ENCODE measurements at regions of chr17 and their contacts with region 1.

Region 1: DNA sequence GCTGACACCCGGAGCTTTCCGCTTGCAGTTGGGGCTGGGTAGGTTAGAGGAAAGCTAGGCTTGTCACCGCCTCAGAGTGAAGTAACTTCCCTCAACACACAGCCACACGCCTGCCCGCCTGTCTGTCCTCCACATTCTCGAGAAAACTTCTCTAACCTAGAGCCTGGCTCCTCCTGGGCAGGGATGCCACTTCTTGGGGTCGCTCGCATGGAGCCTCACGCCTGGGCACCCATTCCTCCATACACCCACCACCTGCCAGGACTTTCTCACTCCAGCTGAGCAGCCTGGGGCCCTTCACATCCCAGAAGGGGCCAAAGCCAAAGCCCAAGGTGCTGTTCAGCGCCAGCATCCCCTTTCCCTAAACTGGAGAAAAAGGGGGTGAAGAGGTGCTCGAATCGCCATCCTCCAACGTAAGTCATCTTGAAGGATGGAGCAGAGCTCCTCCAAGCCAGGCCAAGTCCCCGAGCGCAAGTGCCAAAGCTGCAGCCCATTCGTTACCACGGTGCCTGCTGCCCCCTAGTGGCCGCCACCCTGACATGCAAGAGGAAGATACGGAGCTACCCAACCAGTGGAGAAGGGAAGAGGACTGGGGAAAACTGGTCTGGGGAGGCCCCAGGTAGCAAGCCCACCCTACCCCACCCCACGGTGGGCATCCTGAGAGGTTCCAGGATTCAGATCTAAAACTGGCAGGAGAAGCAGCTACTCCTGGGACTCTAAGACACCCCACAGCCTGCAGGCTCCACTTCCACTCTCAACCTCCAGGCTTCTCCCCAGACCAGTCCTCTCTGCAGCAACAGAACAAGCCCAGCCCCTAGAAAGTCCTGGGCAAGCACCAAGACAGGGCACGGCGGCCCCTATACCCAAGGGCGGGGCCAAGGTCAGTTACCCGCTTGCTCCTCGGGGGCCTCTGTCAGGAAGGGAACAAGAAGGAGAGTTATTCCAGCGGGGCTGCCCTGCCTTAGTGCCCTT is 63.1 kb downstream of the MYO18A start:
- DNase-seq: peak; percentile 63
- ATAC-seq: peak; percentile 83
- H3K4me3 Mint-ChIP-seq: no peak overlapping the region
- H3K27ac Mint-ChIP-seq: no peak overlapping the region
- H3K4me1 Mint-ChIP-seq: peaks cover 7% of the 10 kb centered on the region
- H3K27me3 Mint-ChIP-seq: no peaks in the 10 kb centered on the region
- CTCF ChIP-seq: peak; percentile 29

Region 2: GRCh38 chr17:28967221-28968140 is 149.6 kb before region 1 on chr17:
- CTCF ChIA-PET with region 1: interaction called, 149 read pairs
- POLR2A ChIA-PET with region 1: interaction called, 8 read pairs
- intact Hi-C with region 1: loop called (anchors 1 kb)
- DNase-seq: no peak
- ATAC-seq: no peak
- H3K4me3 Mint-ChIP-seq: no peak overlapping the region
- H3K27ac Mint-ChIP-seq: peak overlapping the region; percentile 68
- H3K4me1 Mint-ChIP-seq: peaks cover 8% of the 10 kb centered on the region
- H3K27me3 Mint-ChIP-seq: peaks cover 16% of the 10 kb centered on the region
- CTCF ChIP-seq: no peak

Region 3: GRCh38 chr17:29102741-29103181 is 14.3 kb before region 1 on chr17:
- CTCF ChIA-PET with region 1: interaction called, 11 read pairs
- POLR2A ChIA-PET with region 1: no interaction called
- intact Hi-C with region 1: no loop called
- DNase-seq: no peak
- ATAC-seq: no peak
- H3K4me3 Mint-ChIP-seq: no peak overlapping the region
- H3K27ac Mint-ChIP-seq: no peak overlapping the region
- H3K4me1 Mint-ChIP-seq: no peaks in the 10 kb centered on the region
- H3K27me3 Mint-ChIP-seq: no peaks in the 10 kb centered on the region
- CTCF ChIP-seq: no peak

Region 4: DNA sequence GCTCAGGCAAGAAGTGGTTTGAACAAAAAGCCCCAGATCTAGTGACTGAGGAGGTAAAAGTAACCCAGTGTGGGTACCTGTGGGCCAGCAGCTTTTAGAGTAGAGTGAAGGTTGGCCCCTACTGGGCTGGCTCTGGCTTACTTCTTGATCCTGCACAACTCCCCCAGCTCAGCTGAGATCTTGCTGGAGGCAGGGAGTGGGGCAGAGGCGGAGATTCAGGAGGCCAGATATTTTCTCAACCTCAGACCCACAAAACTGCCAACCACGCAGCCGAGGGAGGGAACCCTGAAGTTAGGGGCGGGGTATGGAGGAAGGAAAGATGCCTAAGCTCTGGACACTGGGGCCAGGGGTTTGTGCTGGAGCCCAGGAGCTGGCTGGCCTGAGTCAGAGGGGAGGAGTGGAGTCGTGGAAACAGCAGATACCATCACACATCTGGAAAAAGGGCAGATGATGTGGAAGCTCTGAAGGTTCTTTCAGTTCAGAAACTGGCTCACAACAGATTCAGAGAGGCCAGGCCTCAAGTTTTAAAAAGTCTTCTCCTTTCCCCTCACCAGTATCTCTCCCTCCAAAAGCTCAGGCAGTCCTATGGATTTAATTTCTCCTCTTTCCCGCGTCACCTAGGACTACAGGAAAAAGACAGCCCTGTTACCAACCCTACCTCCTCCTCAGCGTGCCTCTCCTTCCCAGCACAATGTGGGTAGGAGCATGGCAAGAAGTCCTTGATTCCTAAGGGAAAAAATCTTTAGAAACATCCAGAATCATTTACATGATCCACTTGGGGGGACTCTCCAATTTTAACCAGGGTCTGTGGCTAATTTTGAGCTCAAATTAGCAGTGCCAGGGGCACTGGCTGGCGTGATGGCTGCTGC is 15.0 kb after region 1 on chr17:
- CTCF ChIA-PET with region 1: interaction called, 36 read pairs
- POLR2A ChIA-PET with region 1: no interaction called
- intact Hi-C with region 1: no loop called
- DNase-seq: no peak
- ATAC-seq: no peak
- H3K4me3 Mint-ChIP-seq: no peak overlapping the region
- H3K27ac Mint-ChIP-seq: peak overlapping the region; percentile 18
- H3K4me1 Mint-ChIP-seq: peaks cover 22% of the 10 kb centered on the region
- H3K27me3 Mint-ChIP-seq: no peaks in the 10 kb centered on the region
- CTCF ChIP-seq: no peak

Region 5: GRCh38 chr17:29140051-29140621 is 23.0 kb after region 1 on chr17:
- CTCF ChIA-PET with region 1: interaction called, 61 read pairs
- POLR2A ChIA-PET with region 1: interaction called, 4 read pairs
- intact Hi-C with region 1: no loop called
- DNase-seq: peak; percentile 51
- ATAC-seq: peak; percentile 62
- H3K4me3 Mint-ChIP-seq: peak overlapping the region; percentile 88
- H3K27ac Mint-ChIP-seq: peak overlapping the region; percentile 97
- H3K4me1 Mint-ChIP-seq: peaks cover 72% of the 10 kb centered on the region
- H3K27me3 Mint-ChIP-seq: no peaks in the 10 kb centered on the region
- CTCF ChIP-seq: no peak

Region 6: DNA sequence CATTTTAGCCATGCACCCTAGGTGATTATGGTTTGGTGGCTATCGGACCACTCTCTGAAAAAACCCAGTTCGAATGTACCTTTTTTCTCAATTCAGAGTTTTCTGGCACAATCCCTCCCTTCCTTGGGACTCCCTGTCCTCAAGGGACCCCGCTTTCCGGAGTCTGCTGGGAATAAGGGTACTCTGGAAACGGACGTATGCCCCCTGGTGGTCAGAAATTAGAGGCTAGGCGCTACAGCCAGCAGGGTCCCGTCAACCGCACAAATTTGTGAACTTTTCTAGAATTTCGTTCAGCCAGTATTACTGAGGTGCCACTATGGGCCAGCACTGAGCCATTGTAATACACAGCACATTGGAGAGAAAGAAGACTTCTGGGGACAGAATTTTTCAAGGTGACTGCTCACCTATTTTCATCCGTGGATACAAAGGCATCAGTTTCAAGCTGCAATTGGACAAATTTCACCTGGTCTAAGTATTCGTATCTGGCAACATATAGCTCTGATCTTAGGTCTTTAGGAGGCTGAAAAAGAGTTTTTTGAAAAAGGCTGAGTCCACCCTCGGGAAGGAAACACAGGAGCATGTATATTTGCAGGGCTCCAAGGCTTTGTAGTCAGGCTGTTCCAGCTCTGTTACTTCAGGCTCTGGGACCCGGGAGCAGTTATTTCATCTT is 102.4 kb after region 1 on chr17:
- CTCF ChIA-PET with region 1: interaction called, 11 read pairs
- POLR2A ChIA-PET with region 1: no interaction called
- intact Hi-C with region 1: loop called (anchors 2 kb)
- DNase-seq: peak; percentile 52
- ATAC-seq: peak; percentile 88
- H3K4me3 Mint-ChIP-seq: no peak overlapping the region
- H3K27ac Mint-ChIP-seq: no peak overlapping the region
- H3K4me1 Mint-ChIP-seq: peaks cover 8% of the 10 kb centered on the region
- H3K27me3 Mint-ChIP-seq: peaks cover 2% of the 10 kb centered on the region
- CTCF ChIP-seq: peak; percentile 20